K562 (cell line): ENCODE measurements at regions of chr12 and their contacts with region 1.

Region 1: DNA sequence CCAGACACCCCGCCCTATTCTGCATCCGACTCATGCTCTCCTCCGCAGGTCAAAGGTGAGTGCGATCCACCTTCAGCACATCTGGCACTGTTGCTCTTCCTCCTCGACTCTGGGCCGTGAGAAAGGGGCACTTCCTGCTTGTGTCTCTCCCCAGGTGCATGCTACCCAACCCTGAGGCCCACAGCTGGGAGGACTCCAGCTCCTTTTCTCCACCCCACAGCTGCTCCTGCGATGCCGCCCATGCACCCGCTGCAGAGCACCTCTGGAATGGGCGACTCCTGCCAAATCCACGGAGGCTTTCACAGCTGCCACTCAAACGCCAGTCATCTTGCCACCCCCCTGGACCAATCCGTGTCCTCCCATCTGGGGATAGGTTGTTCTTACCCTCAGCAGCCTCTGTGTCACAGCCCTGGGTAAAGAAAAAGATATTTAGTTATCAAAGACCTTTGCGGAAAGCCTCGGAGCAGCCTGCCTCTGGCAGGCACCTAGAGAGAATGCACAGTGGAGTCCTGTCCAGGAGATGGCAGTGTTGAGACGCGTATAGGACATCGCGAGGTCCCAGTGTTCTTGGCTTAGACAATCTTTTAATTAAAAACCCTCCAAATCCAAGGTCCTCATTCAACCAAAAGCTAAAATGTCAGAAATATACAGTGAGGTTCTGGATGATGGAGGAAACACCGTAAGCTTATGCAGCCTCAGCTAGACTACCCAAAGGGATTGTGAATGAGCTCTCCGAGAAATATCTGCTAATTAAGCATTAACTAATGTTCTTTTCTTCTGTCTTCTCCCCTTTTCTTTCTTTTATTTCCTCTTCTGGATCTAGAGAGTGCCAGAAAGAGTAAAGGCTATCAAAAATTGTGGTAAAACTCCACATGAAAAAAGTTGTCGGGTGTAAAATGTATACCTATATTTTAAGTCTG is 54.3 kb downstream of the MYRFL start:
- DNase-seq: peak; percentile 74 to 80 (median 77)
- ATAC-seq: peak; percentile 99
- H3K4me3 ChIP-seq: no peak overlapping the region
- H3K27ac ChIP-seq: no peak overlapping the region
- H3K4me1 ChIP-seq: peaks cover 0 to 7% of the 10 kb centered on the region in 2 experiments; a peak in 2 of 5 replicates
- H3K27me3 ChIP-seq: peaks cover 5 to 12% of the 10 kb centered on the region in 2 experiments; a peak in 4 of 5 replicates
- CTCF ChIP-seq: peak; percentile 80 to 92 (median 92)
- EP300 ChIP-seq: no peak
- POLR2A ChIP-seq: no peak
- RAD21 ChIP-seq: peak; percentile 86 to 94

Region 2: GRCh38 chr12:69405466-69405865 is 473.8 kb before region 1 on chr12:
- CTCF ChIA-PET with region 1: no interaction called
- POLR2A ChIA-PET with region 1: no interaction called
- in situ Hi-C with region 1: no loop called
- intact Hi-C with region 1: no loop called
- DNase-seq: no peak
- ATAC-seq: no peak
- H3K4me3 ChIP-seq: no peak overlapping the region
- H3K27ac ChIP-seq: no peak overlapping the region
- H3K4me1 ChIP-seq: no peaks in the 10 kb centered on the region
- H3K27me3 ChIP-seq: no peaks in the 10 kb centered on the region
- CTCF ChIP-seq: no peak
- EP300 ChIP-seq: no peak
- POLR2A ChIP-seq: no peak
- RAD21 ChIP-seq: no peak

Region 3: DNA sequence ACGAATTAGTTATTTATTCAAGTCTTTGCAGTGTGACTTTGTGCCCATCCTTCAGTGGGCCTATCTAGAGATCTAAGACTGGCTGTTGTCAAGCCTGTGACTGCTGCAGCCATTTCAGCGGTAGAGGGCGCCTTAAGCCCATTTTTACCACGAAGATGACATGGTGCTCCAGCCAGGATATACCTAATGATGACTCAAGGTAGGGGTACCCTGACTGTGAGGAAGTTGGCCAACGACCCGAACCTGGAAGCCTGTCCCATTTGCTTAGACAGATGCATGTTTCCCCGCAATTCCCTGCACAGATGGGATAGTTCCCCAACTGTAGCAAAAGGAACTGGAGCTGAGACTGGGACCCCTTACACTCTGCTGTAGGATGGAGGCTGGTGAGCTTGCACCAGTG is 99.4 kb before region 1 on chr12:
- CTCF ChIA-PET with region 1: no interaction called
- POLR2A ChIA-PET with region 1: no interaction called
- in situ Hi-C with region 1: no loop called
- intact Hi-C with region 1: loop called (anchors 5 kb)
- DNase-seq: peak; percentile 35 to 71 (median 52)
- ATAC-seq: peak; percentile 98
- H3K4me3 ChIP-seq: no peak overlapping the region
- H3K27ac ChIP-seq: no peak overlapping the region
- H3K4me1 ChIP-seq: no peaks in the 10 kb centered on the region
- H3K27me3 ChIP-seq: no peaks in the 10 kb centered on the region
- CTCF ChIP-seq: peak; percentile 59 to 77 (median 72)
- EP300 ChIP-seq: no peak
- POLR2A ChIP-seq: no peak
- RAD21 ChIP-seq: peak; percentile 30 to 74; a peak in 3 of 4 replicates

Region 4: DNA sequence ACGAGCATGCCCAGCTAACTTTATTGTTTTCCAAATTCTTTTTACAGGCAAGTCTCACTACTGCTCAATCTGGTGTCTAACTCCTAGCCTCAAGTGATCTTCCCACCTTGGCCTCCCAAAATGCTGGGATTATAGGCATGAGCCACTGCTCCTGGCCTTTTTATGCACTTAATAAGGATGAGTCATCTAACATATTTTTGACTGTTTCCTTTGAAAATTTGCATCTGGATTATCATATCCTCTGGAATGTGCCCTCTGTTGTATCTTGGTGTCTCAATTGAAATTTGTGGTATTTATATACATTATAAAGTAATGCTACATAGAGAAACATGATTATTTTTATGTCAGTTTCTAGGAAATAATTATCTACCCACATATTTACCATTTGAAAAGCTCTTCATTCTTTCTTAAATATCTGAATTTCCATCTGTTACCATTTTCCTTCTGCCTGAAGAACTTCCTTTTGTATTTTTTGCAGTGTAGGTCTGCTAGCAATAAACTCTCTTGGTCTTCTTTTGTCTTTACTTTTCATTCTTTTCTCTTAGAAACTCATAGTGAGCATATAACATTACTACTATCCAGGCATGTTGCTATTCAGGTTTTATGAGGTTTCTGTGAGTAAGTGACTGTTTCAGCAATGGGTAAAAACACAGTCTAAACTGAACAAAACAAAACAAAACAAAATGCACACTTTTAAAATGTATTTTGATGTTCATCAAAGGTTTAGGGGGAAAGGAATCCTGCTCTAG is 311.1 kb after region 1 on chr12:
- CTCF ChIA-PET with region 1: no interaction called
- POLR2A ChIA-PET with region 1: no interaction called
- in situ Hi-C with region 1: no loop called
- intact Hi-C with region 1: no loop called
- DNase-seq: no peak
- ATAC-seq: no peak
- H3K4me3 ChIP-seq: no peak overlapping the region
- H3K27ac ChIP-seq: no peak overlapping the region
- H3K4me1 ChIP-seq: no peaks in the 10 kb centered on the region
- H3K27me3 ChIP-seq: no peaks in the 10 kb centered on the region
- CTCF ChIP-seq: no peak
- EP300 ChIP-seq: no peak
- POLR2A ChIP-seq: no peak
- RAD21 ChIP-seq: no peak

Region 5: GRCh38 chr12:70849265-70849960 is 970.1 kb after region 1 on chr12:
- CTCF ChIA-PET with region 1: no interaction called
- POLR2A ChIA-PET with region 1: no interaction called
- in situ Hi-C with region 1: no loop called
- intact Hi-C with region 1: loop called (anchors 10 kb)
- DNase-seq: peak in 3 of 4 experiments; percentile 8 to 25 (median 24)
- ATAC-seq: peak; percentile 49; the same call in 1 of the 3 replicates
- H3K4me3 ChIP-seq: no peak overlapping the region
- H3K27ac ChIP-seq: no peak overlapping the region
- H3K4me1 ChIP-seq: no peaks in the 10 kb centered on the region
- H3K27me3 ChIP-seq: peaks cover 0 to 3% of the 10 kb centered on the region in 2 experiments; a peak in 1 of 5 replicates
- CTCF ChIP-seq: peak; percentile 23 to 65 (median 42); a peak in 4 of 6 replicates
- EP300 ChIP-seq: no peak
- POLR2A ChIP-seq: no peak
- RAD21 ChIP-seq: peak; percentile 72 to 85